WTC11 (cell line): ENCODE measurements at regions of chr17 and their contacts with region 1.

Region 1: GRCh38 chr17:4420692-4421131 is 13.0 kb upstream of the SPNS3 start:
- DNase-seq: peak; percentile 61
- ATAC-seq: peak; percentile 95
- H3K4me3 Mint-ChIP-seq: no peak overlapping the region
- H3K27ac Mint-ChIP-seq: no peak overlapping the region
- H3K4me1 Mint-ChIP-seq: no peaks in the 10 kb centered on the region
- H3K27me3 Mint-ChIP-seq: peaks cover 2% of the 10 kb centered on the region; the same call in 1 of the 2 replicates
- CTCF ChIP-seq: peak; percentile 77

Region 2: DNA sequence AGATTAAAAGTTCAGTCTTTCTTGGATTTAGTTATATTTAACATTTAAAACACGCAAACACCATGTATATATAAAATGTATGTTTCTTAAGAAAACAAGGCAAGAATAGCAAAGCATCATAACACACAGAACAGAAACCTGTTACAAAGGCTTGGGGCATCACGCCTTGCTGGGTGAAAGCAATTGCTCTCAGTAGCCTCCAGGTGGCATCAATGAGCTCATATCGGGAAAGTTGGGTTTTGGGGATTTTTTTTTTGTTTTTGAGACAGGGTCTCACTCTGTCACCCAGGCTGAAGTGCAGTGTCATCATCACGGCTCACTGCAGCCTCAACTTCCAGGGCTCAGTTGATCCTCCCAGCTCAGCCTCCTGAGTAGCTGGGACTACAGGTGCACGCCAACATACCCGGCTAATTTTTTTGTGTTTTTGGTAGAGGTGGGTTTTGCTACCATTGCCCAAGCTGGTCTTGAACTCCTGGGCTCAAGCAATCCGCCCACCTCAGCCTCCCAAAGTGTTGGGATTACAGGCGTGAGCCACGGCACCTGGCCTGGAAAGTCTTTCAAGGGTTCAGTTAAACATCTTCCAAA is 220.8 kb before region 1 on chr17:
- CTCF ChIA-PET with region 1: interaction called, 11 read pairs
- POLR2A ChIA-PET with region 1: no interaction called
- DNase-seq: peak; percentile 46
- ATAC-seq: peak; percentile 74
- H3K4me3 Mint-ChIP-seq: no peak overlapping the region
- H3K27ac Mint-ChIP-seq: 0 out of 2 replicates have a peak overlapping the region, but pooled peaks have one; percentile 60
- H3K4me1 Mint-ChIP-seq: no peaks in the 10 kb centered on the region
- H3K27me3 Mint-ChIP-seq: no peaks in the 10 kb centered on the region
- CTCF ChIP-seq: peak; percentile 35; the same call in 1 of the 2 replicates

Region 3: GRCh38 chr17:4215882-4216570 is 204.7 kb before region 1 on chr17:
- CTCF ChIA-PET with region 1: interaction called, 15 read pairs
- POLR2A ChIA-PET with region 1: no interaction called
- DNase-seq: no peak
- ATAC-seq: no peak
- H3K4me3 Mint-ChIP-seq: no peak overlapping the region
- H3K27ac Mint-ChIP-seq: peak overlapping the region; percentile 93
- H3K4me1 Mint-ChIP-seq: peaks cover 24% of the 10 kb centered on the region
- H3K27me3 Mint-ChIP-seq: no peaks in the 10 kb centered on the region
- CTCF ChIP-seq: no peak; the same call in 1 of the 2 replicates

Region 4: GRCh38 chr17:4354862-4355514 is 65.7 kb before region 1 on chr17:
- CTCF ChIA-PET with region 1: no interaction called
- POLR2A ChIA-PET with region 1: no interaction called
- DNase-seq: no peak
- ATAC-seq: no peak
- H3K4me3 Mint-ChIP-seq: no peak overlapping the region
- H3K27ac Mint-ChIP-seq: peak overlapping the region; percentile 36
- H3K4me1 Mint-ChIP-seq: peaks cover 46% of the 10 kb centered on the region
- H3K27me3 Mint-ChIP-seq: no peaks in the 10 kb centered on the region
- CTCF ChIP-seq: no peak

Region 5: DNA sequence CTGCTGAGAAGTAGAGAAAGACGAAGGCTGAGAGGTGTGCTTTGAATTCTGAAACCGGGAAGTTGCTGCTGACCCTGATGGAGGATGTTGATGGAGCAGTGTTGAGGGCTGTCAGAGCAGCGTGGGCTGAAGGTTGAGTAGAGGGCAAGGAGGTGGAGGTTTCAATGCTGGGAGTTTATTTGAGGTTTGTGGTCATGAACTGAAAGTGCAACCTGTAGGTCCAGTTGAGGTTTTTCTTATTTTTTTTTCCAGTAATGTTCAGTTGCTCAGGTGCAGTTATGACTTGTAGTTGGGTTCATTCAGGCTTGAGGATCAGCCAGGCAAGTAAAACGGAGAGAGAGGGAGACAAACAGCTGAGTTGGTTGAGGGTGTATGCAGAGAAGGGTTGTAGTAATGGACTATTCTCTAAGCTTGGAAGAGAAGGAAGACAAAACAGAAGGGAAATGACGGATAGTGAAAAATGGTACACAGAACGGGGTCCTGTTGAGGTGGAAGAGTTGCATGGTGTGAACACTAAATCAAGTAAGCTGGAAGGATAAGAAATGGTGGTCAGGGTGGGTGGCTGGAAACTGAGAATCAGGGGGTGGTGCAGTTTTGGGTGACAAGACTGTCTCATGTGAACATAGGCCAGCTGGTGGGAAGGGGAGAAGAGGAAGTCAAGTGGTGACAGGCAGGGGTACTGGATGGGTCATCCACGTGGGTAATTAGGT is 45.5 kb before region 1 on chr17:
- CTCF ChIA-PET with region 1: no interaction called
- POLR2A ChIA-PET with region 1: no interaction called
- DNase-seq: no peak
- ATAC-seq: no peak
- H3K4me3 Mint-ChIP-seq: no peak overlapping the region
- H3K27ac Mint-ChIP-seq: peak overlapping the region; percentile 5; the same call in 1 of the 2 replicates
- H3K4me1 Mint-ChIP-seq: peaks cover 14% of the 10 kb centered on the region
- H3K27me3 Mint-ChIP-seq: no peaks in the 10 kb centered on the region; the same call in 1 of the 2 replicates
- CTCF ChIP-seq: no peak

Region 6: GRCh38 chr17:4498461-4499397 is 78.0 kb after region 1 on chr17 and contains the start of gene SPNS2:
- CTCF ChIA-PET with region 1: interaction called, 30 read pairs
- POLR2A ChIA-PET with region 1: no interaction called
- DNase-seq: peak; percentile 77
- ATAC-seq: peak; percentile 79
- H3K4me3 Mint-ChIP-seq: peak within 1 kb of the TSS; percentile 75
- H3K27ac Mint-ChIP-seq: no peak within 1 kb of the TSS
- H3K4me1 Mint-ChIP-seq: peaks cover 10% of the 10 kb centered on the region
- H3K27me3 Mint-ChIP-seq: peaks cover 74% of the 10 kb centered on the region
- CTCF ChIP-seq: no peak
- total RNA-seq, gene SPNS2: 0.87 to 1.4 TPM (median 1.3 TPM) in 3 replicates

Region 7: GRCh38 chr17:4504178-4504577 is 83.5 kb after region 1 on chr17:
- CTCF ChIA-PET with region 1: interaction called, 30 read pairs
- POLR2A ChIA-PET with region 1: no interaction called
- DNase-seq: no peak
- ATAC-seq: no peak
- H3K4me3 Mint-ChIP-seq: no peak overlapping the region
- H3K27ac Mint-ChIP-seq: no peak overlapping the region
- H3K4me1 Mint-ChIP-seq: peaks cover 10% of the 10 kb centered on the region
- H3K27me3 Mint-ChIP-seq: peaks cover 54% of the 10 kb centered on the region
- CTCF ChIP-seq: no peak

Region 8: GRCh38 chr17:4534026-4534914 is 113.6 kb after region 1 on chr17:
- CTCF ChIA-PET with region 1: interaction called, 57 read pairs
- POLR2A ChIA-PET with region 1: interaction called, 3 read pairs
- DNase-seq: no peak
- ATAC-seq: no peak; the same call in 1 of the 2 replicates
- H3K4me3 Mint-ChIP-seq: no peak overlapping the region
- H3K27ac Mint-ChIP-seq: no peak overlapping the region
- H3K4me1 Mint-ChIP-seq: peaks cover 18% of the 10 kb centered on the region
- H3K27me3 Mint-ChIP-seq: peaks cover 56% of the 10 kb centered on the region
- CTCF ChIP-seq: no peak